ENCODE measurements at regions of chr3 and their contacts with region 1.

Region 1: DNA sequence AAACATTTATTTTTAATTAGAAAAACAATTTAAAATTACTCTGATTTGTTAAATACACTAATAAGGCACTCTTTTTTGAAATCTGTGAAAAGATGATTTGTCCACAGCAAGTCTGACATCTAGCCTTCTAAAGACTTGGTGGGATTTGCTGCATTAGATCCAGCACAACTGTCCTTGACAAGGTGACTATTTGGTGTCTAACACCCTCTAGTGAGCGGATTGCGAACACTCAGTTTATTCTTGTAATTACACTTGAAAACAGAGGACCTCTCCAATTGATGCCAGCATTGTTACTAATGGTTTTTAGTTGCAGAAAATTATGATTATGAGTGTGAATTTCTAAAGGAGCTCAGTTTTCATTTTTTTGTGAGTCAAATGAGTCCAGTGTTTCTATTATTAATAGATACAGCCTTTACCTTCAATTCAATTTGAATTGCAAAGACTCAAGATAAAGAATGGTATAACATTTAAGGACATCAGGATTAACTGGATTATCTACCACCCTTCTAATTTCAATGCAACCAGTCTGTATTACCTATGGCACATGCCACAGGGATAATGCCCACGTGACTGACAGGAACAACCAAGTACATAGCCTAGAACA is 29.7 kb upstream of the STRIT1 start:
- DNase-seq: peak; percentile 33 to 39
- ATAC-seq: peak; percentile 93 to 95
- H3K4me3 ChIP-seq: no peak overlapping the region
- H3K27ac ChIP-seq: peak overlapping the region in 2 of 4 donors; percentile 45 to 70
- H3K4me1 ChIP-seq: peaks cover 0 to 12% of the 10 kb centered on the region in 2 donors
- H3K27me3 ChIP-seq: no peaks in the 10 kb centered on the region
- CTCF ChIP-seq: peak; percentile 62 to 81 (median 74)
- POLR2A ChIP-seq: no peak

Region 2: DNA sequence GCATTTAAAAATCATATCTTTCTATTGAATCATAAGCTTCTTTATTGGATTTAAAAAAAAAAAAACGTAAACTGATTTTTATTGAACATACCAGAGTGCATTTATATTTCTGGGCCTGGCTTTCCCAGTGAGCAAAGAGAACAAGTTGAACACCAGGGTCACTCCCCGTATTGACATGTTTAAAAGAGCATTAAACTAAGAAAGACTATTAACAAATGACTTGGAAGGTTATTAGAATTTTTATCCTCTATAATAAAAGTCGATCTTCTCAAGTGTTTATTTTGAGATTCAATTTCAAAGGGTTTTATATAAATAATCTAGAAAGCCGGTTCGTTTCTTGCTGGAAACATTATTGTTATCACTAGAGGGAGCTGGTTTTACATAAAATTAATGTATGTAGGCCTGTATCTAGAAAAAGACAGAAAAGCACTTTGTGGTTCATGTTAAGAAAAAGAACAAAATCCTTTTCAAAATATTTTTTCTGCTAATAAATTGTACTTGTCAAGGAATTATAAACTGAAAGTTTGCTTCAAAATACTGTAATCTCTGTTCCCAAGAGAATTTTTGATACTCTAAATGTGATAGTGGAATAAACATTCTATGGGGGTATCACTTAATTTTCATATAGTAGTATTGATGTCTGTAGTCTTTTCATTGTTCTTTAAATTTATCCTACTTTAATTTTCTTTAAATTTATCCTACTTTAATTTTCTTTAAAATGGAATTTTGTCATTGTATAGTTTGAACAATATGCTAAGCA is 564.9 kb before region 1 on chr3:
- in situ Hi-C with region 1: loop called (anchors 5 to 10 kb)
- intact Hi-C with region 1: loop called (anchors 1 kb)
- DNase-seq: no peak
- ATAC-seq: peak; percentile 62 to 68
- H3K4me3 ChIP-seq: no peak overlapping the region
- H3K27ac ChIP-seq: no peak overlapping the region
- H3K4me1 ChIP-seq: no peaks in the 10 kb centered on the region
- H3K27me3 ChIP-seq: no peaks in the 10 kb centered on the region
- CTCF ChIP-seq: peak; percentile 25 to 61 (median 53)
- POLR2A ChIP-seq: no peak

Region 3: DNA sequence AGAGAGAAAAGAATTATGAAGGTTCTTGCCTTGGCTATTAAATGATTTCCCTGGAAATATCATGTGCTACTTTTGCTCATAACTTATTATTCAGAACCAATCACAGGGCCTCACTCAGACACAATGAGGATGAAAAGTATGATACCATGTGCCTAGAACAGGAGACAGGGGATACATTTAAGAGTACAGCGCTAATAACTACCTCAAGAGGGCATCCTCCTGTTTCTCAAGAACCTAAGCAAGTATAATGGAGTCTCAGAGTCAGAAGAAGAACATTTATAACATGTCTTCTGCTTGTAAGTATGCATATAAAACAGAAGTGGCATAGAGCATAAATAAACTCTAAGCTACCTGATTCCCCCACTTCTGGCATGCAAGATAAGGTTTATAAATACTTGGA is 368.4 kb before region 1 on chr3:
- in situ Hi-C with region 1: loop called in 3 of 4 experiments (anchors 5 to 25 kb)
- intact Hi-C with region 1: loop called (anchors 2 kb)
- DNase-seq: no peak
- ATAC-seq: peak; percentile 72 to 85
- H3K4me3 ChIP-seq: no peak overlapping the region
- H3K27ac ChIP-seq: no peak overlapping the region
- H3K4me1 ChIP-seq: peaks cover 4 to 7% of the 10 kb centered on the region in 2 donors
- H3K27me3 ChIP-seq: no peaks in the 10 kb centered on the region
- CTCF ChIP-seq: peak in 3 of 5 experiments; percentile 17 to 43 (median 20)
- POLR2A ChIP-seq: no peak

Region 4: GRCh38 chr3:155079746-155080487 is 243.2 kb before region 1 on chr3 and contains the start of gene MME:
- in situ Hi-C with region 1: loop called in 1 of 4 experiments (anchors 25 kb)
- intact Hi-C with region 1: loop called (anchors 5 kb)
- DNase-seq: peak; percentile 56 to 63
- ATAC-seq: peak; percentile 84 to 87
- H3K4me3 ChIP-seq: peak within 1 kb of the TSS; percentile 69 to 79 (median 77)
- H3K27ac ChIP-seq: peak within 1 kb of the TSS; percentile 60 to 87 (median 82)
- H3K4me1 ChIP-seq: peaks cover 0 to 14% of the 10 kb centered on the region in 2 donors
- H3K27me3 ChIP-seq: peaks cover 0 to 6% (median 0%) of the 10 kb centered on the region in 3 donors
- CTCF ChIP-seq: no peak
- POLR2A ChIP-seq: peak; percentile 32 to 61
- total RNA-seq, gene MME: 40.9 to 95.4 (median 68.0) TPM

Region 5: GRCh38 chr3:155334914-155335723 is 12.0 kb after region 1 on chr3:
- in situ Hi-C with region 1: no loop called
- intact Hi-C with region 1: no loop called
- DNase-seq: no peak
- ATAC-seq: no peak
- H3K4me3 ChIP-seq: no peak overlapping the region
- H3K27ac ChIP-seq: no peak overlapping the region
- H3K4me1 ChIP-seq: no peaks in the 10 kb centered on the region
- H3K27me3 ChIP-seq: no peaks in the 10 kb centered on the region
- CTCF ChIP-seq: no peak
- POLR2A ChIP-seq: no peak